Activated CD4-positive, alpha-beta T cell treated with anti-CD3 and anti-CD28 coated beads, Interleukin-2, amount 10 ng/mL, durations not matched to agents 24 days and 14 days (primary cell): ENCODE measurements at regions of chr13 and their contacts with region 1.

Region 1: GRCh38 chr13:106567474-106568298 is at the start of gene ARGLU1:
- DNase-seq: peak; percentile 99
- H3K4me3 Mint-ChIP-seq: peak within 1 kb of the TSS; percentile 97
- H3K27ac Mint-ChIP-seq: peak within 1 kb of the TSS; percentile 95
- H3K4me1 Mint-ChIP-seq: peaks cover 46% of the 10 kb centered on the region
- H3K27me3 Mint-ChIP-seq: no peaks in the 10 kb centered on the region
- total RNA-seq, gene ARGLU1: 86.6 and 96.8 TPM in 2 replicates

Region 2: DNA sequence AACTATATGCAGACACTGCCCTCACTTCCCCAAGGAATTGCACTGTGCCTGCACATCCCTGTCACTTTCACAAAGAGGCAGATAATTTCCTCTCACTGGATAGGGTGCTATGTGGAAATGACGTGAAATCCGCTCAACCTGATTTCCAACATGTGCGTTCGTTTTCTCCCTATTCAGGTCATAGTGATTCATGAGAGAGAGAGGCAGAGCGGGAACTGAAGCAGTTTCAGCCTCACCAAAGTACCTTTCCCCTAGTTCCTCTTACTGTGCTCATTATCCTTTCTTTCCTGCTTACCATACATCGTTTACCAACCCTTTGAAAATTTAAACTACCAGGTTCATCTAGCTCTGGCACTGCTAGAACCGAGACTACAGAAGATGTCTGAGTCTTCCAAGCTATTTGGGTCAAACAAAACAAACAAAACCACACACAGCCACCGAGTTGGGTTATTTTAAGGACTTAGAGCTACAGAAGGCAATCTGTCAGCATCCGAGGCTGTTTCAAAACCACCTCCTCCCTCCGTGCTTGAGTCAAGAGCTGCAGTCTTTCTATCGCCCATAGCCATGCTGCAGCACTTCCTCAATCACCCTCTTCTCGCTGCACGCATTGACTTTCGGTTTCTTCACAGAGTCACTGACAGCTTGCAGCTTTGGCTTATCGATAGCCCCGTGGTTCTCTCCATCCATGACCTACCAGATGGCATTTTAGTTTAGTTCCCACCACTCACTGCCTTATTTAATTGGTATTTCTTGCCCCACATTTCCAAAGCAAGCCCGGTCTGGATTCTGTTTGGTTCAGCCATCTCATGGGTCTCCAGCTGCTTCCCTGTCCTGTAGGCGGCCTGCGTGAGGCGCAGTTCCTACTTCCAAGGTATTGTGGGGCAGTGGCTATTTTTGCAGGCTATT is 1428.1 kb before region 1 on chr13:
- intact Hi-C with region 1: loop called (anchors 10 kb)
- DNase-seq: peak; percentile 90
- H3K4me3 Mint-ChIP-seq: peak overlapping the region; percentile 90
- H3K27ac Mint-ChIP-seq: peak overlapping the region; percentile 92
- H3K4me1 Mint-ChIP-seq: peaks cover 16% of the 10 kb centered on the region
- H3K27me3 Mint-ChIP-seq: peaks cover 2% of the 10 kb centered on the region

Region 3: GRCh38 chr13:106551751-106552150 is 15.9 kb before region 1 on chr13:
- intact Hi-C with region 1: loop called (anchors 2 kb)
- DNase-seq: no peak
- H3K4me3 Mint-ChIP-seq: no peak overlapping the region
- H3K27ac Mint-ChIP-seq: no peak overlapping the region
- H3K4me1 Mint-ChIP-seq: peaks cover 21% of the 10 kb centered on the region
- H3K27me3 Mint-ChIP-seq: no peaks in the 10 kb centered on the region